Psoas muscle (tissue), 8 donors: ENCODE measurements at regions of chr2 and their contacts with region 1.

Region 1: DNA sequence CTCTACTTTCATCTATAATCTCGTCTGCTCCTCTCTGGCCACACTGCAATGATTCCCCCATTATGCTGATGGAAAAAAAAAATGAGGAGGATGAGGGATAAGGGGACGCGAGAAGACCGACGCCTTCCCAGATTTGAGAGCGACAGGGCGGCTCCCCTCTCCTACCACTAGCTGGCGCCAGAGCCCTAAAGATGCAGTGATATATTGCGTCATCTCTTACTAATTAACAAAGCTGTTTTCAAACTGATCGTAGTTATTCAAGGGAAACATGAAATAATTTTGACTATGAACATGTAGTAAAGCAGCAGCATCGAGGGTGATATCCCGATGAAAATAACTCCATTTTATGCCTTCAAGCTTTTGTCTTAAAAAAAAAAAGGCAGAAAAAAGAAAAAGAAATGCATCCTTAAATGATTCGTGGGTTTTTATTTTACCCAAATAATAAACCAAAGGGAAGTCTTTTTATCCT is 48.0 kb upstream of the HNRNPA3 start:
- DNase-seq: peak; percentile 76 to 88
- ATAC-seq: peak; percentile 82 to 92 (median 86)
- H3K4me3 ChIP-seq: peak overlapping the region; percentile 69
- H3K27ac ChIP-seq: peak overlapping the region; percentile 76
- H3K4me1 ChIP-seq: peaks cover 24% of the 10 kb centered on the region
- H3K27me3 ChIP-seq: no peaks in the 10 kb centered on the region
- CTCF ChIP-seq: peak; percentile 100

Region 2: GRCh38 chr2:177212106-177212890 is 47.7 kb after region 1 on chr2 and contains the start of gene HNRNPA3:
- intact Hi-C with region 1: loop called in 1 of 2 experiments (anchors 2 kb)
- DNase-seq: peak; percentile 99 to 100
- ATAC-seq: peak; percentile 91 to 94 (median 93)
- H3K4me3 ChIP-seq: peak within 1 kb of the TSS; percentile 83
- H3K27ac ChIP-seq: peak within 1 kb of the TSS; percentile 95
- H3K4me1 ChIP-seq: peaks cover 41% of the 10 kb centered on the region
- H3K27me3 ChIP-seq: no peaks in the 10 kb centered on the region
- CTCF ChIP-seq: no peak
- total RNA-seq, gene HNRNPA3: 72.8 to 125 (median 91.0) TPM

Region 3: GRCh38 chr2:177296040-177296439 is 131.4 kb after region 1 on chr2:
- intact Hi-C with region 1: loop called (anchors 10 kb)
- DNase-seq: no peak
- ATAC-seq: peak in 1 of 4 donors; percentile 56
- H3K4me3 ChIP-seq: no peak overlapping the region
- H3K27ac ChIP-seq: no peak overlapping the region
- H3K4me1 ChIP-seq: no peaks in the 10 kb centered on the region
- H3K27me3 ChIP-seq: no peaks in the 10 kb centered on the region
- CTCF ChIP-seq: peak; percentile 33

Region 4: GRCh38 chr2:177413703-177414102 is 249.1 kb after region 1 on chr2:
- intact Hi-C with region 1: loop called (anchors 5 kb)
- DNase-seq: no peak
- ATAC-seq: no peak
- H3K4me3 ChIP-seq: no peak overlapping the region
- H3K27ac ChIP-seq: no peak overlapping the region
- H3K4me1 ChIP-seq: peaks cover 14% of the 10 kb centered on the region
- H3K27me3 ChIP-seq: no peaks in the 10 kb centered on the region
- CTCF ChIP-seq: no peak

Region 5: GRCh38 chr2:177604271-177605065 is 439.9 kb after region 1 on chr2:
- intact Hi-C with region 1: loop called (anchors 10 kb)
- DNase-seq: no peak
- ATAC-seq: peak in 3 of 4 donors; percentile 37 to 58 (median 57)
- H3K4me3 ChIP-seq: no peak overlapping the region
- H3K27ac ChIP-seq: no peak overlapping the region
- H3K4me1 ChIP-seq: no peaks in the 10 kb centered on the region
- H3K27me3 ChIP-seq: no peaks in the 10 kb centered on the region
- CTCF ChIP-seq: peak; percentile 59

Region 6: DNA sequence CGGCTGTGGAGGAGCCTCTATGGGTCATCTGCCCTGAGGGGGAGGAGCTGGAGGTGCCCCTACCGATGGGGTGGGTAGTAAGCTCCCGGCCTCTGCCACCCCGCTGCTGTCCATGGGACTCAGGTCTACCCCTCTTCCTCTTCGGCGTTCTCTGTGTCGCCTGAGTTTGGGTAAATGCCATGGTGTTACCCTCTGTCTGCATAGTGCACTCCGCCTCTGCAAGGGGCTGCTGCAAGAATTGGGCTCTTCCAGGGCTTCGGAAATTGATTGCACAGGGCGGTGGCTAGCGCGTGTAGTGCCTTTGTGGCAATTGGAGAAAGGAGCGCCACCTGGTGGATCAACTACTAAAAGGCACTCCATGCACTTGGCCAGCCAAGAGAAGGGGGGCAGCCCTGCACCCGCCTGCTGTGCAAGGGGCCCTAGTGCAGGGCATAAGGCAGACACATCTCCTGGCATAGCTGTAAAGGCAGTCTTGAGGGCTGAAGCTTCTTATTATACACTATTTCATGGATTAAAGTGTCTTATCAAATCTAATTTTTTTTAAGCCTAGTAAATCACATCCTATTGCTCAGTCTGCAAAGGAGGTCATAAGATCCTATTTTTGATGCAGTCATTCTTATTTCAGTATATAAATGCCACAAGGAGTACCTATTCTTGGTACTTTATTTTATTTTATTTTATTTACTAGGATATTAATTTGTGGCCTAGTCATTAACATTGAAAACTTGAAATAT is 599.1 kb after region 1 on chr2:
- intact Hi-C with region 1: loop called in 1 of 2 experiments (anchors 5 kb)
- DNase-seq: peak; percentile 68 to 82
- ATAC-seq: peak; percentile 52 to 98 (median 91)
- H3K4me3 ChIP-seq: no peak overlapping the region
- H3K27ac ChIP-seq: no peak overlapping the region
- H3K4me1 ChIP-seq: no peaks in the 10 kb centered on the region
- H3K27me3 ChIP-seq: no peaks in the 10 kb centered on the region
- CTCF ChIP-seq: peak; percentile 72